Caco-2 (cell line): ENCODE measurements at regions of chr7 and their contacts with region 1.

Region 1: DNA sequence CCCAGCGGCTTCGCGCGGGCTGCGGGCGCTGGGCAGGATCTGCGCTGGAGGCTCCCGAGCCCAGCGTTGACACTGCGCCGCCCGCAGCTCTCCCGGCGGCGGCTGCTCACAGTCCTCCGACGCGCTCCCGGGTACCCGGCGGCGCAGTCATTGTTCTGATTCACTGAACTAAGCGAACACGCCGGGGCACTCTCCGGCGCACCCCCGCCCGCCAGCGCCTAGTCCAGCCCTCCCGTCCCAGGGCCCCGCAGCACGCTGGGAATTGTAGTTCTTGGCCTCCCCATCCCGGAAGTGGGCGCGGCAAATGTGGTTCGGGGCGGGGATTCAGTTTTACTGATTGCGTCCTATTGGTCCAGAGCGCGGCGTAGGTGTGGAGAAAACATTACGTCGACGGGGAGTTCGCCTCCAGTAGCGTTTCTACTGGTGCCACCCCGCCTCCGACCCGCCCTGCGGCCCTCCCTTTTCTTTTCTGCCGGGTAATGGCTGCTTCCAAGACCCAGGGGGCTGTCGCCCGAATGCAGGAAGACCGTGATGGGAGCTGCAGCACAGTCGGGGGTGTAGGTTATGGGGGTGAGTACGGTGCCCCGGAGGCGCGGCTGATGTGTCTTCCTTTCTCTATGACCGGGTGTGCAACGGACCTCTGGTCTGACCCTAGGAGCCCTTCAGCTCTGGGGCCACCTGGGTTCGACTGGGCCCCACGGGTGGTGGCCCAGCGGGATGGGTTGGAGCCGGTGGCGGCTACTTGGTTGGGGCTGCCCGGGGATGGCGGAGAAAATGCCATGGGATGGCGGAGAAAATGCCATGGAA is at the starts of genes DOCK4 and ZNF277:
- DNase-seq: peak; percentile 98
- H3K4me3 ChIP-seq: peak within 1 kb of the TSS; percentile 91
- H3K4me3 Mint-ChIP-seq: peak within 1 kb of the TSS; percentile 97
- H3K27ac Mint-ChIP-seq: peak within 1 kb of the TSS; percentile 93
- H3K4me1 ChIP-seq: peaks cover 9% of the 10 kb centered on the region
- H3K4me1 Mint-ChIP-seq: peaks cover 16% of the 10 kb centered on the region
- H3K27me3 ChIP-seq: no peaks in the 10 kb centered on the region
- H3K27me3 Mint-ChIP-seq: peaks cover 11% of the 10 kb centered on the region
- CTCF ChIP-seq: no peak
- total RNA-seq, gene DOCK4: 2.0 and 2.7 TPM in 2 replicates
- total RNA-seq, gene ZNF277: 22.8 and 23.2 TPM in 2 replicates

Region 2: GRCh38 chr7:111746950-111747349 is 459.5 kb before region 1 on chr7:
- CTCF ChIA-PET with region 1: no interaction called
- POLR2A ChIA-PET with region 1: no interaction called
- intact Hi-C with region 1: loop called (anchors 2 kb)
- DNase-seq: peak in 1 of 2 experiments; percentile 17
- H3K4me3 ChIP-seq: no peak overlapping the region
- H3K4me3 Mint-ChIP-seq: no peak overlapping the region
- H3K27ac Mint-ChIP-seq: no peak overlapping the region
- H3K4me1 ChIP-seq: peaks cover 25% of the 10 kb centered on the region
- H3K4me1 Mint-ChIP-seq: peaks cover 15% of the 10 kb centered on the region
- H3K27me3 ChIP-seq: no peaks in the 10 kb centered on the region
- H3K27me3 Mint-ChIP-seq: no peaks in the 10 kb centered on the region
- CTCF ChIP-seq: no peak

Region 3: GRCh38 chr7:112056409-112056808 is 150.0 kb before region 1 on chr7:
- CTCF ChIA-PET with region 1: no interaction called
- POLR2A ChIA-PET with region 1: no interaction called
- intact Hi-C with region 1: loop called (anchors 5 kb)
- DNase-seq: peak in 1 of 2 experiments; percentile 12
- H3K4me3 ChIP-seq: no peak overlapping the region
- H3K4me3 Mint-ChIP-seq: no peak overlapping the region
- H3K27ac Mint-ChIP-seq: no peak overlapping the region
- H3K4me1 ChIP-seq: peaks cover 26% of the 10 kb centered on the region
- H3K4me1 Mint-ChIP-seq: peaks cover 34% of the 10 kb centered on the region
- H3K27me3 ChIP-seq: no peaks in the 10 kb centered on the region
- H3K27me3 Mint-ChIP-seq: no peaks in the 10 kb centered on the region
- CTCF ChIP-seq: no peak

Region 4: GRCh38 chr7:112162142-112163020 is 44.1 kb before region 1 on chr7:
- CTCF ChIA-PET with region 1: no interaction called
- POLR2A ChIA-PET with region 1: no interaction called
- intact Hi-C with region 1: loop called (anchors 5 kb)
- DNase-seq: peak; percentile 14 to 39
- H3K4me3 ChIP-seq: no peak overlapping the region
- H3K4me3 Mint-ChIP-seq: no peak overlapping the region
- H3K27ac Mint-ChIP-seq: no peak overlapping the region
- H3K4me1 ChIP-seq: peaks cover 24% of the 10 kb centered on the region
- H3K4me1 Mint-ChIP-seq: peaks cover 7% of the 10 kb centered on the region
- H3K27me3 ChIP-seq: no peaks in the 10 kb centered on the region
- H3K27me3 Mint-ChIP-seq: no peaks in the 10 kb centered on the region
- CTCF ChIP-seq: no peak

Region 5: GRCh38 chr7:112331492-112331891 is 125.1 kb after region 1 on chr7:
- CTCF ChIA-PET with region 1: no interaction called
- POLR2A ChIA-PET with region 1: no interaction called
- intact Hi-C with region 1: loop called (anchors 2 kb)
- DNase-seq: peak in 1 of 2 experiments; percentile 52
- H3K4me3 ChIP-seq: no peak overlapping the region
- H3K4me3 Mint-ChIP-seq: peak overlapping the region; percentile 13
- H3K27ac Mint-ChIP-seq: peak overlapping the region; percentile 79
- H3K4me1 ChIP-seq: peaks cover 17% of the 10 kb centered on the region
- H3K4me1 Mint-ChIP-seq: peaks cover 9% of the 10 kb centered on the region
- H3K27me3 ChIP-seq: no peaks in the 10 kb centered on the region
- H3K27me3 Mint-ChIP-seq: no peaks in the 10 kb centered on the region
- CTCF ChIP-seq: no peak

Region 6: DNA sequence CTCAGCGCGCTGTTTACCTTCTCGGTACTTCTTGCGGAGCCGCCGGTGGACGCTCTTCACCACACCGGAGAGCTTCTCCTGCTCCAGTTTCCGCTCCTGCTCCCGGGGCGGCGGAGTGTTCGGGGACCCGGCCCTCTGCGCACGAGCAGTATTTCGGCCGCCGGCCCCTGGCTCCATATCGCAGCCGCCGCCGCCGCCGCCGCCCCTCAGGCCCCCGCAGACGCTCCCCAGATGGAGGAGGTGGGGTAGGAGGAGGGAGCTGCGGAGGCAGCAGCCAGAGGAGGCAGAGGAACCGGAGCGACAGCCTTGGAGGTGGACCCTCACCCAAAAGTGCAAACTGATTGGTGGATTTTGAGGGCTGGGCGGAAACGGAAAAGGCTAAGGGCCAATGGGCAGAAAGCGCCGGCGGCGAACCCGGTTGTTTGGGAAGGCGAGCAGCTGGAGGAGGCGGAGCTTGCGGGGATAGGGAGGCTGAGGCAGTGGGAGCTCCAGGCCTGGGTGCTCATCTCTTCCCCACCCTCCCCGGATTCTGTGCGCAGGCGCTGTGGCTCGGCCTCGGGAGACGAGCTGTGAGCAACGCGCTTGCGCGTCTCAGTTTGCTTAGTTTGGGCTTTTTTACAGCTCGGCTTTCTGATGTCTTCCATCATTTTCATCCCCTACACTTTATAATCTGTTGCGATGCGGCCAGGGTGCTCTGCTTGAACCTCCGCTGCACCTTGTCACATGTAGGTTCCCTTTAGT is 733.3 kb after region 1 on chr7:
- CTCF ChIA-PET with region 1: no interaction called
- POLR2A ChIA-PET with region 1: no interaction called
- intact Hi-C with region 1: loop called (anchors 2 kb)
- DNase-seq: peak; percentile 99
- H3K4me3 ChIP-seq: peak overlapping the region; percentile 87
- H3K4me3 Mint-ChIP-seq: peak overlapping the region; percentile 89
- H3K27ac Mint-ChIP-seq: peak overlapping the region; percentile 91
- H3K4me1 ChIP-seq: peaks cover 6% of the 10 kb centered on the region
- H3K4me1 Mint-ChIP-seq: no peaks in the 10 kb centered on the region
- H3K27me3 ChIP-seq: no peaks in the 10 kb centered on the region
- H3K27me3 Mint-ChIP-seq: no peaks in the 10 kb centered on the region
- CTCF ChIP-seq: no peak